Caco-2 (cell line): ENCODE measurements at regions of chr4 and their contacts with region 1.

Region 1: DNA sequence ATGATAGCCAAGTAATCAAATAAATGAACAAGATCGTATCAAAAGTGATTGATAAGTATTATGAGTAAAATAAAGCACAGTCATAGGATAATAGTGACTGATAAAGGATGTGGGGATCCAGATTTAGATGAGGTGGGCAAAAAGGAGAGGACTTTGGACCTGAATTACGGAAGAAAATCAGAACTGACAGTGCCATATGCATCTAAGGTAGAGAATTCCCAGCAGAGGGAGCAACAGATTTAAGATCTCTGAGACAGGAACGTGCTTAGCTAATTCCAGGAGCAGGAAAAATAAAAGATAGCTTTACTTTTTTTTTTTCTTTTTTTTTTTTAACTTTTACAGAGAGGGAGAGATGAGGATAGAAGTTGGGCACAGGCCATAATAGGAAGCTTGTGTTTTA is 189.9 kb downstream of the NWD2 start:
- DNase-seq: peak in 1 of 2 experiments; percentile 33
- H3K4me3 ChIP-seq: no peak overlapping the region
- H3K4me3 Mint-ChIP-seq: no peak overlapping the region
- H3K27ac Mint-ChIP-seq: no peak overlapping the region
- H3K4me1 ChIP-seq: peaks cover 58% of the 10 kb centered on the region
- H3K4me1 Mint-ChIP-seq: peaks cover 37% of the 10 kb centered on the region
- H3K27me3 ChIP-seq: no peaks in the 10 kb centered on the region
- H3K27me3 Mint-ChIP-seq: no peaks in the 10 kb centered on the region
- CTCF ChIP-seq: peak in 1 of 2 experiments; percentile 31

Region 2: DNA sequence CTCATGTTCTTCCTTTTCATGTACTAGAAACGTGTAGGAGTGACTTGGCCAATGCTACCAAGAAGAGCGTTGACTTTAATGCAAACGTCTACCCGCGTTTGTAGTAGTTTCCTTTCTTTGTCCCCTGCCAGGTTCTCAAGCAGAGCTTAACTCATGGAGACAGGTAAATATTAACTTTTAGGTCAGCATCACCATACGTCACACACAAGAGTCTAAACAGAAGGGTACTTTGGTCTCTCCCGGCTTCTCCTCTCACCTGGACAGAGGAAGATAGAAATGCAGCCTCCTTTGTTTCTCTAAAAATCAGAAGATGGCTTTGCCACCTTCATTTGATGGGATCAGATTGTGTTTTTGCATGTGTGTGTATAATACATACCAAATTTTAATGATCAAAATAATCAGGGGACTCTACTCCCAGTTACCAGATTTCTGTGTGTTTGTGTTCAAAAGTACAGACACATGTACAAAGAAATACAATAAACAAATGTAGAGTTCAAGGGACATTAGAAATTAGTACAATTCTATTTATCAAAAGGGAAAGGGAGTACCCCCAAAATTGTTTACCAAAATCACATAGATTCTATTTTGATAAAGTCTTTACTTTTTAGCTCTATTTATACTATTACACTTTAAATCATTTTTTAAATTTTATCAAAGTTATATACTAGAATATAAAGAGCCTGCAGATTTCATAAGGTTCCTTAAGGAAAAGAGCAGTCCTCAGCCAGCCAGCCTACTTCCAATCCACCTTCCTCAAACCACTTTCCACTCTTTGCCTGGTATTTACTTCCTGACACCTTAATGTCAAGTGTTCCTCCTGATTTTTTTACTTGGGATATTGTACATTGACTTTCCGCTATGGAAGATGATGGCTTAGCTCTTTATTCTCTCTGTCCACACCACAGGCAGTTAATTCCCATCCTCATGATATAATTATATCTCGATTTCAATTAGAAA is 56.2 kb after region 1 on chr4:
- CTCF ChIA-PET with region 1: no interaction called
- POLR2A ChIA-PET with region 1: no interaction called
- intact Hi-C with region 1: loop called (anchors 10 kb)
- DNase-seq: peak in 1 of 2 experiments; percentile 57
- H3K4me3 ChIP-seq: peak overlapping the region; percentile 22
- H3K4me3 Mint-ChIP-seq: peak overlapping the region; percentile 70
- H3K27ac Mint-ChIP-seq: peak overlapping the region; percentile 85
- H3K4me1 ChIP-seq: peaks cover 24% of the 10 kb centered on the region
- H3K4me1 Mint-ChIP-seq: peaks cover 26% of the 10 kb centered on the region
- H3K27me3 ChIP-seq: no peaks in the 10 kb centered on the region
- H3K27me3 Mint-ChIP-seq: no peaks in the 10 kb centered on the region
- CTCF ChIP-seq: no peak

Region 3: GRCh38 chr4:37568481-37568880 is 134.0 kb after region 1 on chr4:
- CTCF ChIA-PET with region 1: interaction called, 5 read pairs
- POLR2A ChIA-PET with region 1: no interaction called
- intact Hi-C with region 1: loop called (anchors 5 kb)
- DNase-seq: no peak
- H3K4me3 ChIP-seq: no peak overlapping the region
- H3K4me3 Mint-ChIP-seq: no peak overlapping the region
- H3K27ac Mint-ChIP-seq: no peak overlapping the region
- H3K4me1 ChIP-seq: no peaks in the 10 kb centered on the region
- H3K4me1 Mint-ChIP-seq: peaks cover 12% of the 10 kb centered on the region
- H3K27me3 ChIP-seq: no peaks in the 10 kb centered on the region
- H3K27me3 Mint-ChIP-seq: no peaks in the 10 kb centered on the region
- CTCF ChIP-seq: no peak

Region 4: GRCh38 chr4:37615059-37615719 is 180.7 kb after region 1 on chr4:
- CTCF ChIA-PET with region 1: no interaction called
- POLR2A ChIA-PET with region 1: no interaction called
- intact Hi-C with region 1: no loop called
- DNase-seq: no peak
- H3K4me3 ChIP-seq: no peak overlapping the region
- H3K4me3 Mint-ChIP-seq: no peak overlapping the region
- H3K27ac Mint-ChIP-seq: no peak overlapping the region
- H3K4me1 ChIP-seq: no peaks in the 10 kb centered on the region
- H3K4me1 Mint-ChIP-seq: no peaks in the 10 kb centered on the region
- H3K27me3 ChIP-seq: no peaks in the 10 kb centered on the region
- H3K27me3 Mint-ChIP-seq: no peaks in the 10 kb centered on the region
- CTCF ChIP-seq: no peak

Region 5: DNA sequence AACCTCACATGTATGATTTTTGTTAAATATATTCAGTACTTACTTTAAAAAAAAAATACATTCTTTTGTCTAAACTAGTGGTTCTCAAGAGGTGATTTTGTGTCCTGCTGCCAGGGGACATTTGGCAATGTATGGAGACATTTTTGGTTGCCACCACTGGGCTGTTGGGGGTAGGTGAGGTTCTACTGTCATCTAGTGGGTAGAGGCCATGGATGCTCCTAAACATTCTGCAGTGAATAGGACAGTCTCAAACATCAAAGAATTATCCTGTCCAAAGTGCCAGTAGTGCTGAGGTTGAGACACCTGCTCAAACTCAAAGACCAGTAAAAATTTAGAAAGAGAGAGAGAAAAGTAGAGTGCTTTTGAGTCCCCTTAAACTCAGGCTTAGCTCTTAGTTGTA is 359.1 kb after region 1 on chr4:
- CTCF ChIA-PET with region 1: no interaction called
- POLR2A ChIA-PET with region 1: no interaction called
- intact Hi-C with region 1: loop called (anchors 5 kb)
- DNase-seq: peak; percentile 38 to 45
- H3K4me3 ChIP-seq: no peak overlapping the region
- H3K4me3 Mint-ChIP-seq: no peak overlapping the region
- H3K27ac Mint-ChIP-seq: no peak overlapping the region
- H3K4me1 ChIP-seq: no peaks in the 10 kb centered on the region
- H3K4me1 Mint-ChIP-seq: peaks cover 4% of the 10 kb centered on the region
- H3K27me3 ChIP-seq: no peaks in the 10 kb centered on the region
- H3K27me3 Mint-ChIP-seq: no peaks in the 10 kb centered on the region
- CTCF ChIP-seq: peak; percentile 17 to 60